Activated naive CD4-positive, alpha-beta T cell treated with anti-CD3 and anti-CD28 coated beads for 36 hours (primary cell): ENCODE measurements at regions of chr9 and their contacts with region 1.

Region 1: GRCh38 chr9:110256380-110257096 is at the start of gene TXN:
- DNase-seq: peak; percentile 94
- H3K4me3 Mint-ChIP-seq: peak within 1 kb of the TSS; percentile 91
- H3K27ac Mint-ChIP-seq: peak within 1 kb of the TSS; percentile 96
- H3K4me1 Mint-ChIP-seq: peaks cover 56% of the 10 kb centered on the region
- H3K27me3 Mint-ChIP-seq: no peaks in the 10 kb centered on the region
- total RNA-seq, gene TXN: 460 to 475 TPM

Region 2: GRCh38 chr9:109110326-109111021 is 1146.1 kb before region 1 on chr9:
- CTCF ChIA-PET with region 1: no interaction called
- intact Hi-C with region 1: loop called (anchors 5 kb)
- DNase-seq: no peak
- H3K4me3 Mint-ChIP-seq: peak overlapping the region; percentile 44
- H3K27ac Mint-ChIP-seq: peak overlapping the region; percentile 75
- H3K4me1 Mint-ChIP-seq: peaks cover 82% of the 10 kb centered on the region
- H3K27me3 Mint-ChIP-seq: no peaks in the 10 kb centered on the region

Region 3: DNA sequence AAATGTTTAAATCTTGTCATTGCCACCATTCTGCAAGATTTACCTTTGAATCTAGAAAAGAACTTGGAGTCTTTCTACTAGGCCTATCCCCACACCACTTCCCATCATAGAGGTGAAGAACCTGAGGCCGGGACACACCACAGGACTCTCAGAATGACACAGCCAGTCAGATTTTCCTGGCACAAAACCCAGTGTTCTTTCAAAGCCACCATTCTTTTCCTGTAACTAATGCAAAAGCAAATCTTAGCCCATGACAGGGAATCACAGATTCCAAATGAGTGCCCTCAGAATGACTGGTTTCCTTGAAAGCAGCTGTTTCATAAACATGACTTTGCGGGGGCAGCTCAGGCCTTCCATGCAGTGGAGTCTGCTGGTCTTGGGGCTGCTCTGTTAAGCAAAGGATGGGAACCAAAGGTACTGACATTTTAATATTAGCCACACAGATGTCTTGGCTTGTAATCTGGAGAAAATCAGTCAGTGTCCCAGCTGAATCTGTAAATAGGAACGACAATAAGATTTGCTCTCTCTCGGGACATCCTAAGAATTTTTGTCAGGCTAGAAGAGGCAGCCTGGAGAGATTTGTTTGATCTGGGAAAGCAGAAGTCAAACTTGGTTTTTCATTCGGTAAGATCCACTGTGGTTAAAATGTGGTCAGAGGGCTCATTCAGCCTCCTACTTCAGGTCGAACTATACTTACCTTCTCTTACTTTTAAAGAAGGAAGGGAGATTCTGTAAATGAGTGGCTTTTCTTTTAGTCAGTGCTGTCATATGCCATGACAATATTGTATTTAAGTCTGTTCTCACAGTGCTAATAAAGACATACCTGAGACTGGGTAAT is 361.4 kb before region 1 on chr9:
- CTCF ChIA-PET with region 1: no interaction called
- intact Hi-C with region 1: loop called (anchors 2 kb)
- DNase-seq: peak; percentile 89
- H3K4me3 Mint-ChIP-seq: peak overlapping the region; percentile 45
- H3K27ac Mint-ChIP-seq: peak overlapping the region; percentile 92
- H3K4me1 Mint-ChIP-seq: peaks cover 36% of the 10 kb centered on the region
- H3K27me3 Mint-ChIP-seq: no peaks in the 10 kb centered on the region

Region 4: DNA sequence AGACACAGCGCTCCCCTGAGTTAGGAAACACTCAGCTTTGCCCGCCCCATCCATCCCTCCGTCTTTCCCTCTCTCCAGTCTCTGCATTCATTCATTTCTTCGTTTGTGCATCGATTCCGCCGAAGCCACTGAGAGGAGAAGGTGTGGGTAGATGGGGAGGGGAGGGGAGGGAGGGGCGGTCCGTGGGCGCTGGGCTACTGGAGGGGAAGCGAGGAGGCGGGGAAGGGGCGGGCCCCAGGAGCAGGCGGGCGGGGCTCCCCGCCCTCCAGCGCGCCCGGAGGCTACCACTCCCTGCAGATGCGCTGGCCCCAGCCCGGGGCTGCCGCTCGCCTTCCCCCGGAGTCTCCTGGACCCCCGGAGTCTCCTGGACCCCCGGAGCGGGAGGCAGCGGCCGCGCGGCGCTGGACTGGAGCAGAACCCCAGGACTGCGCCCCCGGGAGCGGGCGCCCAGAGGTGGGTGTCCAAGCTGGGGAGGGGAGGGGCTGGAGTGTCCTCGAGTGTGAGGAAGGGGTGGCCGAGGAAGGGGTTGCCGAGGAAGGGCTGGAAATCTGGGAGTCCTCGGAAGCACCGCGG is 208.0 kb before region 1 on chr9:
- CTCF ChIA-PET with region 1: no interaction called
- intact Hi-C with region 1: loop called (anchors 1 kb)
- DNase-seq: peak; percentile 86
- H3K4me3 Mint-ChIP-seq: peak overlapping the region; percentile 84
- H3K27ac Mint-ChIP-seq: no peak overlapping the region
- H3K4me1 Mint-ChIP-seq: peaks cover 33% of the 10 kb centered on the region
- H3K27me3 Mint-ChIP-seq: peaks cover 12% of the 10 kb centered on the region

Region 5: DNA sequence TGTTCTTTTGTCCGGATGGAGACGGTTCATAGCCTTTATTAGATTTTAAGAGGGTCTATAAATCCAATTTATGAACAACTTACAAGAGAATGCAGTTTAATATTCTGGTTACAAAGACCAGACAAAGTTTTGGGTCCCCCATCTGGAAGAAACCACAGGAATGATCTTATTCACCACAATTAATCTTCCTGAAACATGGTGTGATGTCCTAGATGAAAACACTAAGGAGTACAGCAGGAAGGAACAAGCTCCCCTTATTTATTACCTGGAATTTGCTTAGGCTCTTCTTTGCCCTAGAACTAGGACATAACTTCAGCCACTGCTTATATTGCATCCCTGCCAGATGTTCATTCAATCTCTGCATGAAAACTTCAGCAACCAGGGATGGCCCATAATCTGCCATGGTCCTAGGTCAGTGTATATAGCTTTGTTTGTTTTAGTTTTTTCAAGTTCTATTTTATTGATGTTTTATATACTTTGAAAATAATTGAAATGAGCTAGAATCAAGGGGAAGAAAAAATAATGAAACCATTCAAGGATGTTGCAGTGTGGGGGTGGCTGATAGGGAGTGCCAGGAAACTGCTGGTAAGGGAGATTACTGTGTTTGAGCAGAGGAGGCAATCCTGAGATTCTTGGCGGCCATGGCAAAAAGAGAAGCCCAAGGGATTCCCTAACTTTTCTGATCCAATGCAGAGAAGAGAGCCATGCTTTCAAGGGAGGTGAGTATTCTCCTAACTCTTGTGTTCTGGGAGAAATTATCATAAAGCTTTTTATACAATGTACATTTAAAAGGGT is 64.3 kb after region 1 on chr9:
- CTCF ChIA-PET with region 1: no interaction called
- intact Hi-C with region 1: loop called (anchors 5 kb)
- DNase-seq: no peak
- H3K4me3 Mint-ChIP-seq: no peak overlapping the region
- H3K27ac Mint-ChIP-seq: no peak overlapping the region
- H3K4me1 Mint-ChIP-seq: peaks cover 8% of the 10 kb centered on the region
- H3K27me3 Mint-ChIP-seq: peaks cover 3% of the 10 kb centered on the region

Region 6: DNA sequence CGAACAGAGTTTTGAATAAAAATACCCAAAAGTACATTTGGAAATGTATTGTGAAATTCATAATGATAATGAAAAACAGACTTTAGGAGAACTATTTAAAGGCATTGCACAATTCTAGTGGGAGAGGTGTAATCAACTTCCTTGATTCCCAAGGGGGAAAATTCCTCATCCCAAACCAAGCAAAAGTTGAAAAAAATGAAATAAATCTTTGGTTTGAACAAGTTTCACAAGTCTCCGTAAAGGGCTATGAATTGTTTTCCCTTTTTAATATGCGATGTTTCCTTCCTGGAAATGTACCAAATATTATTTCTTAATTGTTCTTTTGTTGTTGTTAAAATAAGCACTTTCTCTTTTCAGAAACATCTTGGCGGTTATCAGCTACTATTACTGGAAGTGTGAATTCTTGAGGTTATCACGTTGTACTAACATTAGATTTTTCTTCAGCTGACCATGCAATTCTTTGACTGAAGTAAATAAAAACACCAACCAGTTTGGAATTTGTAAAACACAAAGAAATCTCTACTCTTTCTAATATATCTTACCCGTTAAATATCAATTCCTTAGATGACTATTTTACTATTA is 263.7 kb after region 1 on chr9:
- CTCF ChIA-PET with region 1: no interaction called
- intact Hi-C with region 1: no loop called
- DNase-seq: no peak
- H3K4me3 Mint-ChIP-seq: no peak overlapping the region
- H3K27ac Mint-ChIP-seq: no peak overlapping the region
- H3K4me1 Mint-ChIP-seq: no peaks in the 10 kb centered on the region
- H3K27me3 Mint-ChIP-seq: no peaks in the 10 kb centered on the region

Region 7: GRCh38 chr9:111525056-111525977 is 1268.8 kb after region 1 on chr9 and contains the start of gene ZNF483:
- CTCF ChIA-PET with region 1: no interaction called
- intact Hi-C with region 1: loop called (anchors 5 kb)
- DNase-seq: peak; percentile 73
- H3K4me3 Mint-ChIP-seq: peak within 1 kb of the TSS; percentile 89
- H3K27ac Mint-ChIP-seq: peak within 1 kb of the TSS; percentile 80
- H3K4me1 Mint-ChIP-seq: peaks cover 11% of the 10 kb centered on the region
- H3K27me3 Mint-ChIP-seq: no peaks in the 10 kb centered on the region
- total RNA-seq, gene ZNF483: 2.3 TPM

Region 8: DNA sequence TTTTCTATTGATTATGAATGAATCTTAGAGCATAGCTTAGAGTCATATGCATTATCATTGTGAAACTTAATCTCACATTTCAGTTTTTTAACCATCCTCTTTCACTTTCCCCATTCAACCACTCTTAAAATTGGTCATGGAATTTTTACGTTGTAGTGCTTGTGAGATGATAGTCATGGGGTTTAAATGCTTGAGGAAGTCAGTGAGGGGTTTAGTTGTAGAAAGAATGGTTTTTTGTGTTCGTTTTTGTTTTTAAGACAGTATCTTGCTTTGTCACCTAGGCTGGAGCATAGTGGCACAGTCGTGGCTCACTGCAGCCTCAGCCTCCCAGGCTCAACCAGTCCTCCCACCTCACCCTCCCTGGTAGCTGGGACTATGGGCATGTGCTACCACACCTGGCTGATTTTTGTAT is 1659.7 kb after region 1 on chr9:
- CTCF ChIA-PET with region 1: no interaction called
- intact Hi-C with region 1: loop called (anchors 10 kb)
- DNase-seq: peak; percentile 45
- H3K4me3 Mint-ChIP-seq: no peak overlapping the region
- H3K27ac Mint-ChIP-seq: peak overlapping the region; percentile 81
- H3K4me1 Mint-ChIP-seq: peaks cover 53% of the 10 kb centered on the region
- H3K27me3 Mint-ChIP-seq: no peaks in the 10 kb centered on the region